ENCODE measurements at regions of chr3 and their contacts with region 1.

Region 1: DNA sequence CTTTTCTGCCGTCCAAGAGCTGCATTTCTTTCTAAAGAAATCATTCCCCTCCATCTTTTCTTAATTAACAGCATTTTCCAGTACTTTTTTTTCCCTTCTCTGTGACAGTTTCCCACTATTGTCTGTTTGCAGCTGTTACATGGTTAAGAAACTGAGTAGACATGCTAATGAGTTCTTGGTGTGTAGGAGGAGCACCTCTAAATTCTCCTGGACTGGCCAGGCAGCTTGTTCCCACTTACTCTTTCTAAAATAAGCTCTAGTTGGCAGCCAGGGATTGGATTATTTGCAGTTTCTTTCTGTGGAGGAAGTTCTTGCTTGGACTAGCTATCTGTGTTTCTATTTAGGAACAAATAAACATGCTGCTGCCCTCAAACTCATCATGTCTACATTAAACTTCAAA is 235.1 kb upstream of the GAP43 start:
- DNase-seq: no peak

Region 2: DNA sequence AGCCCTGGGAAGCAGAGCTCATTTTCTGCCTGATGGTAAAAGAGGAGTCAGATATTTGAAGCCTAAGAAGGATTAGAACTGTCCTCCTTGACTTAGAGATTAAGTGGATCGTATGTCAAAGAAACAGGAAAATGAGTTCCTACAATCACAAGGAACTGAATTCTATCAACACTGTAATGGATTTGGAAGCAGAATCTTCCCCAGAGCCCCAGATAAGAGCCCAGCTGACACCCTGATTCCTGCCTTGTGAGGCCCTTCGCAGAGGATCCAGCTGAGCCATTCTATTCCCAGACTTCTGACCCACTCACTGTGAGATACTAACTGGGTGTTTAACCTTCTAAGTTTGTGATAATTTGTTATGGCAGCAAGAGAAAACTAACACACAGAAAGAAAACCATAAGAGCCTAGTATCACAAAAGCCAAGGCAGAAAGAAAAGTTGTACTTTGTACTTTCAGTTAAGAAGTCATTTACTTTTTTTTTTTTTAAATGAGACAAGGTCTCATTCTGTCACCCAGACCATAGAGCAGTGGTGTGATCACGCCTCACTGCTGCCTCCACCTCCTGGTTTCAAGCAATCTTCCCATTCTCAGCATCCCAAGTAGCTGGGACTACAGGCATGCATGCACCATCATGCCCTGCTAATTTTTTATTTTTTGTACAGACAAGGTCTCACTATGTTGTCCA is 180.0 kb before region 1 on chr3:
- intact Hi-C with region 1: no loop called
- DNase-seq: no peak

Region 3: GRCh38 chr3:115518100-115518852 is 130.1 kb after region 1 on chr3:
- intact Hi-C with region 1: loop called (anchors 5 kb)
- DNase-seq: peak; percentile 84

Measured in cardiac septum (tissue), 1 donor.